Stomach (tissue), 19 donors: ENCODE measurements at regions of chr1 and their contacts with region 1.

Region 1: DNA sequence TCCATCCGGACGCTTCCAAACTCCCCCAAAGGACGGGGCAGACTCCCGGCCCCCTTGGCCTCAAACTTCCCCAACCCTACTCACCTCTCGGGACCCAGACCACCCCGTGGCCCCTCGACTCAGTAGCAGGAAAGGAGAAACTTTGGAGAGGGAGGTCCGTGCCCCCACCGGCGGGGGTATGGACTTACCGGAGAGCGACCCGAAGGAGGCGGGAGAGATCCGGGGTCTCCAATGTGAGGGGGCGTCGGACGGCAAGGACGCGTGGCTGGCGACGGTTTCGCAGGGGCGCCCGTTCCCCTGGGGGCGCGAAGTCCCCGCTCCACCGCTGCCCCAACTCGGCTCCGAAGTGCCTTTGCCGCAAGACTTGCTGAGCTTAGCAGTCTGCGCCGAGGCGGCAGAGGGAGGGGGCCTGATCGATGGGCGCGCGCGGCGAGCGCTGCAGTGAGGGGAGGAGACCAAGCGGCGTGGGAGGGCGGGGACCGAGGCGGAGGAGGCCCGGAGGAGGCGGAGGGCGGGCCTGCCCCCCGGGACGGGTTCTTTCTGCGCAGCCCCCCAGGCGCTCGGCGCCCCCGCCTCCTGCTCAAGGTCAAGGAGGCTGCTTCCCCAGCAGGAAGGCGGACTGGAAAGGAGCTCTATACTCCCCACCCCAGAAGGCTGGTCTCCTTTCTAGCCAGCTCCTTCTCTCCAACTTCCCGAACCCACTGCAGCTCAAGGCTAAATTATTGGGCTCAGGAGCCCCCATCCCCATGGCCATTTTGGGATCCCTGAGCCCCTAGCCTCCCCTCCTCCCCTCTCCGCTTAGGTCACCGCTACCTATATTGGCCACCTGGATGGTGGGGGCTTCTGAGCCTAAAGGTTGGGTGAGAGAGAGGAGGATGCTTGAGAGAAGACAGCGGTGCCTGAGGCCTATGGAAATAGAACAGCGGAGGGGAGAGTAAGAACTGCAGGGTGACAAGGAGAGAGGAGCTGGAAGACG is at the start of gene SYT2:
- DNase-seq: peak; percentile 35 to 87
- H3K4me3 ChIP-seq: peak within 1 kb of the TSS; percentile 30 to 46 (median 34)
- H3K27ac ChIP-seq: no peak within 1 kb of the TSS
- H3K4me1 ChIP-seq: peaks cover 10 to 27% (median 19%) of the 10 kb centered on the region in 4 donors
- H3K27me3 ChIP-seq: peaks cover 11 to 80% (median 48%) of the 10 kb centered on the region in 3 donors
- CTCF ChIP-seq: no peak
- EP300 ChIP-seq: no peak
- POLR2A ChIP-seq: no peak
- total RNA-seq, gene SYT2: 0.18 to 0.29 TPM in 2 of 5 donors, not detected in the others

Region 2: DNA sequence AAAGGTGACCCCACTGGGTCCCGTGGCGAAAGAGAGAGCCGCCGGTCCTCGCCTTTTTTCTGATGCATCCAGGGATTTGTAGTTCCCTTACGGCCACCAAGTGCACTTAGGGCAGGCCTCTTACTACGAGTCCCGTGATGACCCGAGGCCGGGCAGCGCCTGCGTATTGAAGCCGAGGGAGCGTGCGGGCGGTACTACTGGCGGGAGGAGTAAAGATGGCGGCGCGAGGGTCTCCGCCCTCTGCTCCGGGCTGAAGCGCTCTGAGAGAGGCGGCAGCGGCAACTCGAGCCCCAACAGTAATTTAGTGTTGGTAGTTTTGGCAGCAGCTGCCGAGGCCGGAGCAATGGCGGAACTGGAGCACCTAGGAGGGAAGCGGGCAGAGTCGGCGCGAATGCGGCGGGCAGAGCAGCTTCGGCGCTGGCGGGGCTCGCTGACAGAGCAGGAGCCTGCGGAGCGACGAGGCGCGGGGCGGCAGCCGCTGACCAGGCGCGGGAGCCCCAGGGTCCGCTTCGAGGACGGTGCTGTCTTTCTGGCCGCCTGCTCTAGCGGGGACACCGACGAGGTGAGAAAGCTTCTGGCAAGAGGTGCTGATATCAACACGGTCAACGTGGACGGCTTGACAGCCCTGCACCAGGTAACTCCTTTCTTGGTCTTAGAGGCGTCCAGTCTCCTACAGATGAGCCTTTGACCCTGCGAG is 361.7 kb before region 1 on chr1 and contains the start of gene PPP1R12B:
- intact Hi-C with region 1: loop called (anchors 10 kb)
- DNase-seq: peak; percentile 98 to 99
- H3K4me3 ChIP-seq: peak within 1 kb of the TSS; percentile 75 to 99 (median 96)
- H3K27ac ChIP-seq: peak within 1 kb of the TSS; percentile 87 to 94 (median 92)
- H3K4me1 ChIP-seq: peaks cover 10 to 39% (median 31%) of the 10 kb centered on the region in 4 donors
- H3K27me3 ChIP-seq: no peaks in the 10 kb centered on the region
- CTCF ChIP-seq: peak in 1 of 7 experiments; percentile 20
- EP300 ChIP-seq: no peak
- POLR2A ChIP-seq: peak in 1 of 4 donors; percentile 25
- total RNA-seq, gene PPP1R12B: 76.5 to 352 (median 131) TPM

Region 3: GRCh38 chr1:202781180-202781579 is 70.8 kb after region 1 on chr1:
- intact Hi-C with region 1: no loop called
- DNase-seq: no peak
- H3K4me3 ChIP-seq: no peak overlapping the region
- H3K27ac ChIP-seq: no peak overlapping the region
- H3K4me1 ChIP-seq: peaks cover 0 to 51% (median 14%) of the 10 kb centered on the region in 4 donors
- H3K27me3 ChIP-seq: no peaks in the 10 kb centered on the region
- CTCF ChIP-seq: no peak
- EP300 ChIP-seq: no peak
- POLR2A ChIP-seq: no peak